AG04449 (cell line): ENCODE measurements at regions of chr5 and their contacts with region 1.

Region 1: GRCh38 chr5:14190194-14191164 is 47.3 kb downstream of the TRIO start:
- DNase-seq: peak; percentile 97
- H3K4me3 ChIP-seq: no peak overlapping the region; the same call in 1 of the 2 replicates
- CTCF ChIP-seq: no peak

Region 2: GRCh38 chr5:14142827-14143548 is 47.5 kb before region 1 on chr5 and contains the start of gene TRIO:
- CTCF ChIA-PET with region 1: interaction called, 3 read pairs
- POLR2A ChIA-PET with region 1: interaction called, 20 read pairs
- DNase-seq: no peak
- H3K4me3 ChIP-seq: peak within 1 kb of the TSS; percentile 95
- CTCF ChIP-seq: peak; percentile 53

Region 3: DNA sequence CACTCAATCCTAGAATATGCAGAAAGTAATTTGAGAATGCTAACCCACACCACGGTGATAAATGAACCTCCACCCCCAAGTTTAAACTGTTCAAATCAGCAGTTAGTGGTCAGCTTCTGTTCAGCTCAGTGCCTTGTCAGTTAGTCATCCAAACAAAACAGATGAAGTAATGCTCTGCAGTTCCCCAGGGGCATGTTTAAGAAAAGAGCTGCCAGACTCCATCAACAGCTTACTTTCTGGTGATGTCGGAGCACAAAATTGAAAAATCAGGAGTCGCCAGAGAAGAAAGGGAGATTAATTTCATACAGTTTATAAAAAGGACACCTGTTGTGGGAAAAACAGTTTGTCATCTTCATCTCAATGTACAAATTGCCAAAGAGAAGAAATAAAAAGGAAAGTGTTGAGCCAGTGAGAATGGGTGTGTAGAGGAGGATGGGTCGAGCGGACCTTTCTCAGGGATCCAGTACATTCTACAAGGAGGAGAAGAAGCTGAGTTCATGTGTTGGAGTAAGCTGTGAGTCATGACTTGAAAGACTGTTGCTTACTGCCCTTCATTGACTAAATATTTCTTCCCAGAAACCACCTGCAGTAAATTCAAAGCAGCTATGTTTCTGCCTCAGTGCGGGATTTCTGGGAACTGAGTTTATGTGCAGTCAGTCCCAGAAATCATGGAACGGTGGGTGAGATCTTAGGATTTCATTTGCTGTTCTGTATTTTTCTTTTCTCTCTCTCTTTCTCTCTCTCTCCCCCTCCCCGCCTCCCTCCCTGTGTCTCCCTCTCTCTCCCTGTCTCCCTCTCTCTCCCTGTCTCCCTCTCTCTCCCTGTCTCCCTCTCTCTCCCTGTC is 33.6 kb before region 1 on chr5:
- CTCF ChIA-PET with region 1: no interaction called
- POLR2A ChIA-PET with region 1: interaction called, 10 read pairs
- DNase-seq: peak; percentile 96
- H3K4me3 ChIP-seq: peak overlapping the region; percentile 44
- CTCF ChIP-seq: no peak

Region 4: DNA sequence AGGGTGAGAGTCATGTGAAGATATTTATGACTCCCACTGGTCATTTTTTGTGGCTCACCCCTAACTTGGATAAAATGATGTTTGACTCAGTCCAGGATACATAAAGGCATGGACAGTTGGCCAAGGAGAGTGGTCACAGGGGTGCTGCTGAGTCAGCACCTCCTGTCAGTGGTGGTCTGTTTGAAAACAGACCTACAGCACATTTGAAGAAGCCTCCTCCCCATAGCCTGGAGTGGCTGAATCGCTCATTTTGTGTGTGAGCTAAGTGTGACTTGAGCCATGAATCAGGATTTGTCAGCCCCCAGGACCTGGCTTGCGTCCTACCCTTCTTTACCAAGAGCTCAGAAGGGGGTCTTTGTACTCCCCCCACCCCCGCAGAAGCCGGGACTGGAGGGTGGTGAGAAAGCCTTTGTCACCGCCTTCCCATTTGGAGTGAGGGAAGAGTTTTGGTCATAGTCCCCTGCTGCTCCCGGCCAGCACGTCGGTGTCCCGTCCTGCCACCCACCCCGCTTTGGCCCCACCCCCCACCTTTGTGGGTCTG is 11.7 kb before region 1 on chr5:
- CTCF ChIA-PET with region 1: no interaction called
- POLR2A ChIA-PET with region 1: interaction called, 12 read pairs
- DNase-seq: no peak
- H3K4me3 ChIP-seq: no peak overlapping the region
- CTCF ChIP-seq: no peak

Region 5: DNA sequence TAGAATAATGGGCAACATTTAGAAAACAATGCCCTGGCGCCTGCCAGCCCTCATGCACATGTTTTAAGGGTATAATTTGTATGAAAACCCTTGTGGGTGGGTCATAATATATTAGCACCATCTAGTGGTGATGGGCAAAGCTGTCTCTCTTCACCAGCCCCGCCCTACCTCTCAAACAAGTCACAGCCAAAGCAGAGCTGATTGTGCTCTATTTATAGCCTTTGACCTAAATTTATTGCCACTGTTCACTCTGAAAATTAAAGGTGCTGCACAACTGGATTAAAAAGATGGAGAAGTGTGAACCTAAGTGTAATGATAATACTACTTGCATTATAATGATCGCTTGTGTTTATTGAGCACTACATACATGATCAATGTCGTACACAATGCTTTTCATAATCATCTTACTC is 813.0 kb after region 1 on chr5:
- CTCF ChIA-PET with region 1: no interaction called
- POLR2A ChIA-PET with region 1: no interaction called
- DNase-seq: no peak
- H3K4me3 ChIP-seq: no peak overlapping the region
- CTCF ChIP-seq: peak; percentile 70